ENCODE measurements at regions of chr16 and their contacts with region 1.

Region 1: GRCh38 chr16:66344533-66345145 is 21.9 kb upstream of the CDH5 start:
- DNase-seq: no peak
- H3K4me3 ChIP-seq: no peak overlapping the region; a peak in 1 of 4 replicates
- H3K27ac ChIP-seq: no peak overlapping the region
- H3K4me1 ChIP-seq: no peaks in the 10 kb centered on the region
- H3K27me3 ChIP-seq: peaks cover 12% of the 10 kb centered on the region
- CTCF ChIP-seq: peak; percentile 89
- EP300 ChIP-seq: no peak
- RAD21 ChIP-seq: peak; percentile 60

Region 2: DNA sequence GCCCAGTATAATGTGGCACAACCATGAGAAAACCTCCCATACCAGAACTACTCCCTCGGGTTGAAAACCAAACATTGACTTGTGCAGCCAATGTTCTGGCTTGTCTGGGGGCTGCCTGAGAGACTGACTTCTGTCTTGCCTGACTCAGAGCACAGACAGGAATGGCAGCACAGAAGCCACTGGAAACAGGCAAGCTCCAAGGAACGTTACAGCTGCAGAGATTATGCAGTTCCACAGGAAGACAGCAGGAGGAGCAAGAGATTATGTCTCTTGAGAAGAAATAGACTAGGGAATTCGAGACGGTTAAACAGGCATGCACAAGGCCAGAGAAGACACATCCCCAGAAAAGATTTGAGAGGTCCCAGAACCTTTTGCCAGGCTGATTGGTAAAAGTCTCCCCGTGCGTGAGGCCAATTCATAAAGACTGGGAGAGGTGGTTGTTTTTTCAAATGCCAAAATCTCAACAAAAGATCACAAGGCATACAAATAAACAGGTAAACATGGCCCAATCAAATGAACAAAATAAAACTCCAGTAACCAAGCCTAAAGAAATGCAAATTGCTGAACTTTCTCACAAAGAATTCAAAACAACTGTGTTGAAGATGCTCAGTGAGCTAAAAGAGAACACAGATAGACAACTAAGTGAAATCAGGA is 68.7 kb before region 1 on chr16:
- CTCF ChIA-PET with region 1: interaction called, 40 read pairs
- POLR2A ChIA-PET with region 1: no interaction called
- DNase-seq: peak; percentile 55
- H3K4me3 ChIP-seq: no peak overlapping the region
- H3K27ac ChIP-seq: no peak overlapping the region
- H3K4me1 ChIP-seq: no peaks in the 10 kb centered on the region; a peak in 1 of 4 replicates
- H3K27me3 ChIP-seq: no peaks in the 10 kb centered on the region
- CTCF ChIP-seq: peak; percentile 69
- EP300 ChIP-seq: no peak
- RAD21 ChIP-seq: peak; percentile 66

Region 3: DNA sequence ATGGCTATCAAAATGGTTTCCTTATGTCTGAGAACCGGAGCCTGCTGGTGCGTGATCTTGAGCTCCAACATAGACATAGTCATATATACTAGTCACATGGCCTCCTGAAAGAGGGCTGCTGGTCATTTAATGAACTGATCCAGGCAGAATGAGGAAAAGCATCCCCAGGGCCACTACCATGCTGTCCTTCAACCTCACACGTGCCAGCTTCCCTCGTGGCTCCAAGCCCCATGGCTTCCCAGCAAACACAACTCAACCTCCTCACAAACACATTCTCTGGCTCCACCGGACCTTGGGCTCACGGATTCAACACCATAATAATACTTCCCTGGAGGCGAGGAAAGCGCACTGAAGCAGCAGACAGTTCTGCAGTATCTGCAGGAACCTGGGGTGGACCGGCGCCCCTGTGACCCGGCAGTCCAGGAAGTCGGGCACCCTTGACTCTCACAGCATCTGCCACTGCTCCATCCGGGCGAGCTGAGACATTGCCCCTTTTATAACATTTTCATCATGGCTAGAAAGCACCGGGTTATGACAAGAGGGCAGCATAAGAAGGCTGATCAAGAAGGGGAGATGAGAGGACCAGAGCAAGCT is 35.3 kb before region 1 on chr16:
- CTCF ChIA-PET with region 1: interaction called, 12 read pairs
- POLR2A ChIA-PET with region 1: no interaction called
- DNase-seq: no peak
- H3K4me3 ChIP-seq: no peak overlapping the region
- H3K27ac ChIP-seq: no peak overlapping the region
- H3K4me1 ChIP-seq: no peaks in the 10 kb centered on the region
- H3K27me3 ChIP-seq: peaks cover 24% of the 10 kb centered on the region
- CTCF ChIP-seq: no peak
- EP300 ChIP-seq: no peak
- RAD21 ChIP-seq: no peak

Region 4: GRCh38 chr16:66315210-66315825 is 29.3 kb before region 1 on chr16:
- CTCF ChIA-PET with region 1: interaction called, 77 read pairs
- POLR2A ChIA-PET with region 1: no interaction called
- DNase-seq: peak; percentile 79
- H3K4me3 ChIP-seq: no peak overlapping the region; a peak in 1 of 4 replicates
- H3K27ac ChIP-seq: no peak overlapping the region
- H3K4me1 ChIP-seq: no peaks in the 10 kb centered on the region; a peak in 1 of 4 replicates
- H3K27me3 ChIP-seq: peaks cover 7% of the 10 kb centered on the region; the same call in 1 of the 2 replicates
- CTCF ChIP-seq: peak; percentile 96
- EP300 ChIP-seq: no peak
- RAD21 ChIP-seq: peak; percentile 93

Region 5: DNA sequence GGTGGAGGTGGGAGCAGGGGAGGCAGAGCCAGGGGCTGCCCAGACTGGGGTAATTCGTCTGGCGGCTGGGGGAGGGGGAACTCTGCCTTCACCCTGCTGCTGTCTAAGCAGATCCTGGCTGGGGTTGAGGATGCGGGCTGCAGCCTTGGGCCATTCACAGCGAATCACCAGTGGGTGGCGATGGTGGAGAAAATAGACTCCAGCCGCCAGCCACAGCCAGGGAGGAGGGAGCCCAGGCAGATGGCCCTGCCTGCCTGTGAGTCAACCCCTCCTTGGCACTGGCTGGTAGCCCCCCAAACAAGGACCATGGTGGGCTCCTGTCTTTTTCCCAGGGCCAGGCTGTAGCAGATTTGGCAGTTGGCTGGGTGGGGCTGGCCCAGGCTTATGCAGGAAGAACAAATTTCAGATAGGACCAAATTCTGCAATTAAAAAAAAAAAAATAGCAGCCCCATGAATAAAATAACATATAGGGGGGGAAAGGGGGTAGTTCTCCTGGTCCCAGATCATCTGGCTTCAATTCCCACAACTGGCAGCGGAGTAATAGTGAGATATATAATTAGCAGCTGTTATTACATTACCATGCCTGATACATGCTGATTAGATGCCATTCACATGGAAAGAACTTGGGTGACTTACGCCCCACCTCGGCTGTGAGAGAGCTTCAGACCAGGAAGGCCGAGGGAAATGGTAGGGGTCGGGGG is 19.7 kb before region 1 on chr16:
- CTCF ChIA-PET with region 1: interaction called, 133 read pairs
- POLR2A ChIA-PET with region 1: no interaction called
- DNase-seq: peak; percentile 79
- H3K4me3 ChIP-seq: no peak overlapping the region
- H3K27ac ChIP-seq: no peak overlapping the region
- H3K4me1 ChIP-seq: peaks cover 0 to 15% of the 10 kb centered on the region in 2 experiments; a peak in 1 of 4 replicates
- H3K27me3 ChIP-seq: peaks cover 7% of the 10 kb centered on the region; the same call in 1 of the 2 replicates
- CTCF ChIP-seq: peak; percentile 47
- EP300 ChIP-seq: no peak
- RAD21 ChIP-seq: peak; percentile 44

Region 6: DNA sequence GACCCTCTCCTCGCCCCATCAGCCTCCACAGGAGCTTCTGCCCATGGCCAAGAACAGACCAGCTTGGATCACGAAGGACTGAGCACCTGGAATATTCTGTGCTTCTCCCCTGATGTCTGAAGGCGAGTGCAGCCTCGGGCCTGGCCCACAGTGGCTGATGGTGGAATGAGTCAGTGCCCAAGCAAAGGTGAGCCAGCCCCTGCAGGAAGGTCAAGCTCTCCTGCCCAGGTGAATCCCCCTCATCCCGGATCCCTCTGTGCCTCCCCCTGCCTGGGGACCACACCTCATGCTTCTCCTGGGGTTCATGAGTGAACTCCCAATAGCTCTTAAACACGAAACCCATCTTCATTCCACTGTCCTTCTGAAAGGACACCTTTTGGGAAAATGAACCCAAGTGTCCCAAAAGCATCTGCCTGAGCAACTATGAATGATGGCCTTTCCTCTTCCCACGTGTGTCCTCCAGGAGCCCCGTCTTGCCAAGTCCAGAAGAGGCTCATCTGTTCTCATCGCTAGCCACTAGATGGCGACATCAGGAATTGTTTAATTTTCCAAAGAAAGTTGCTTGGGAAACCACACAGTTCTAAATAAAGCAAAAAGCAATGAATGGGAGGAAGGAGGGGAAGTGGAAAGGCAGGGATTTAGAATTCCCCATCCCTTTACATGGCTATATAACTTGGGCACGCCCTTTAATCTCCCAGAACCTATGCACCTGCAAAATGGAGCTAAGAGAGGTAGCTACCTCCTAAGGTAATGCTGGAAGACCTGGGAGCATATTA is 12.7 kb after region 1 on chr16:
- CTCF ChIA-PET with region 1: interaction called, 143 read pairs
- POLR2A ChIA-PET with region 1: no interaction called
- DNase-seq: peak; percentile 76
- H3K4me3 ChIP-seq: no peak overlapping the region
- H3K27ac ChIP-seq: no peak overlapping the region
- H3K4me1 ChIP-seq: peaks cover 0 to 9% of the 10 kb centered on the region in 2 experiments; a peak in 1 of 4 replicates
- H3K27me3 ChIP-seq: peaks cover 16% of the 10 kb centered on the region; the same call in 1 of the 2 replicates
- CTCF ChIP-seq: peak; percentile 84
- EP300 ChIP-seq: no peak
- RAD21 ChIP-seq: peak; percentile 57

Region 7: GRCh38 chr16:66366433-66367299 is 22.0 kb after region 1 on chr16 and contains the start of gene CDH5:
- CTCF ChIA-PET with region 1: interaction called, 12 read pairs
- POLR2A ChIA-PET with region 1: no interaction called
- DNase-seq: peak; percentile 47
- H3K4me3 ChIP-seq: no peak within 1 kb of the TSS
- H3K27ac ChIP-seq: no peak within 1 kb of the TSS
- H3K4me1 ChIP-seq: peaks cover 0 to 5% of the 10 kb centered on the region in 2 experiments; a peak in 1 of 4 replicates
- H3K27me3 ChIP-seq: no peaks in the 10 kb centered on the region
- CTCF ChIP-seq: no peak
- EP300 ChIP-seq: no peak
- RAD21 ChIP-seq: no peak
- polyA plus RNA-seq, gene CDH5: not detected in 2 replicates

Region 8: GRCh38 chr16:66427036-66427860 is 82.6 kb after region 1 on chr16 and contains the start of gene BEAN1:
- CTCF ChIA-PET with region 1: no interaction called
- POLR2A ChIA-PET with region 1: no interaction called
- DNase-seq: peak; percentile 86
- H3K4me3 ChIP-seq: peak within 1 kb of the TSS; percentile 40 to 48
- H3K27ac ChIP-seq: no peak within 1 kb of the TSS
- H3K4me1 ChIP-seq: peaks cover 0 to 11% of the 10 kb centered on the region in 2 experiments; a peak in 1 of 4 replicates
- H3K27me3 ChIP-seq: peaks cover 50% of the 10 kb centered on the region
- CTCF ChIP-seq: no peak
- EP300 ChIP-seq: no peak
- RAD21 ChIP-seq: no peak
- polyA plus RNA-seq, gene BEAN1: 0.07 TPM in 1 of 2 replicates, not detected in the other

Region 9: DNA sequence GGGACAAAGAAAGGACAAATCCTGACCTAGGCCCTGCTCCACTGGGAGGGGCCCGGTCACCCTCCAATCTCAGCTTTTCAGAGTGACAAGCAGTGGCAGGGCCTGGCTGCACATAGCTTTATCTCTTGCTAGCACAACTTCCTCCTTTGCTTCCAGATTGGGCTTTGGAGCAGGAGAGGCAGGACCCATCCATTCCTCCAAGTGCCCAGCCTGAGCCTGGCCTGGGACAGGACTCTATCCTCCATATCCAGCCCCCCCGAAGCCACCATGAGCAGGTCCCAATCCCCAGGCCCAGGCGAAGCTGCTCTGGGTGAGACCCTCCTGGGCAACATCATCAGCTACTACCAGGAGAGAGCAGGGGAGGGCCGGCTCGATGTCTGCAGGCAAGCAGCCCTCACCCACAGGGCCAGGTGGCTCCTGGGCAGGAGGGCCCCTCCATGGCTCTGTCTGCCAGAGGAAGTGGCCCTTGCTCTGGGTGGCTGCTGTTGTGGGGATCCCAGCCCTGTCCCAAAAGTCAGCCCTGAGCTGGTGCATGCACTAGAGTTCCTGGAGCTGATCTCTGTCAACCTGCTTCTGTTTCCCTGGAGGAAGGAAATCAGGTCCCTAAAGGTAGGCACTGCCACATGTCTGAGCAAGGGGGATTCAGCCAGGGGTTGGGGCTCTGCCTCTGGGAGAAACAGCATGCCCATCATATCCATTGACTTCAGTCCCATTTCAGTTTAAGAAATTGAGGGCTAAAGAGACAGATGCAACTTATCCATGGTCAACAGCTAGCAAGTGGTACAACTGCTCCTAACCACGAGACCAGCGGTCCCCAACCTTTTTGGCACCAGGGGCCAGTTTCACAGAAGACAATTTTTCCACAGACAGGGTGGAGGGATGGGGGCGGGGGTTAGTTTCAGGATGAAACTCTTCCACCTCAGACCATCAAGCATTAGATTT is 146.4 kb after region 1 on chr16:
- CTCF ChIA-PET with region 1: no interaction called
- POLR2A ChIA-PET with region 1: no interaction called
- DNase-seq: no peak
- H3K4me3 ChIP-seq: no peak overlapping the region
- H3K27ac ChIP-seq: no peak overlapping the region
- H3K4me1 ChIP-seq: peaks cover 10% of the 10 kb centered on the region in 2 experiments; a peak in 2 of 4 replicates
- H3K27me3 ChIP-seq: no peaks in the 10 kb centered on the region
- CTCF ChIP-seq: no peak
- EP300 ChIP-seq: no peak
- RAD21 ChIP-seq: no peak

Region 10: DNA sequence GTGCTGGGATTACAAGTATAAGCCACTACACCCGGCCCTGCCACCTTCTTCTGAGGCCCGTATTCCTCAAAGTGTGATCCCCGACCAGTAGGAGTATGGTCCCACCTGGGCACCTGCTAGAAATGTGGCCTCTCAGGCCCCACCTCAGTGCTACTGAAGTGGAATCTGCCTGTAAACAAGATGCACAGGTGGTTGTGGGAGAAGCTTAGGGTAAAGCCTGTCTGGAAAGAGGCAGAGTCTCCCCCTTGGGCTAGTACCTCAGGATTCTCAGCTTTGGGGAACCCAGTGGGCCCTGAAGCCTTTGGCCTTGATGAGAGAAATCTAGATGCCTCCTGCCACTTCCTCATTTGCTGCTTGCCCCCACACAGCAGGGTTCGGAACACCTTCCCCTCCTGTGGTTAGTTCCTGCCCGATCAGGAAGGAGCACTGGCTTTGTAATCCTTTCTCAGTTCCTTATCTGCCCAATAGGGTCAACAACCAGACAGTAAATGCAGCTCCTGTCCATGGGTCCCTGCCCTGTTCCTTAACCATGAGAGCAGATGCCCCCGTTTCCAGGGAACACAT is 180.0 kb after region 1 on chr16:
- CTCF ChIA-PET with region 1: no interaction called
- POLR2A ChIA-PET with region 1: no interaction called
- DNase-seq: no peak
- H3K4me3 ChIP-seq: no peak overlapping the region
- H3K27ac ChIP-seq: no peak overlapping the region
- H3K4me1 ChIP-seq: no peaks in the 10 kb centered on the region
- H3K27me3 ChIP-seq: no peaks in the 10 kb centered on the region
- CTCF ChIP-seq: no peak
- EP300 ChIP-seq: no peak
- RAD21 ChIP-seq: no peak